ENCODE measurements at regions of chr6 and their contacts with region 1.

Region 1: DNA sequence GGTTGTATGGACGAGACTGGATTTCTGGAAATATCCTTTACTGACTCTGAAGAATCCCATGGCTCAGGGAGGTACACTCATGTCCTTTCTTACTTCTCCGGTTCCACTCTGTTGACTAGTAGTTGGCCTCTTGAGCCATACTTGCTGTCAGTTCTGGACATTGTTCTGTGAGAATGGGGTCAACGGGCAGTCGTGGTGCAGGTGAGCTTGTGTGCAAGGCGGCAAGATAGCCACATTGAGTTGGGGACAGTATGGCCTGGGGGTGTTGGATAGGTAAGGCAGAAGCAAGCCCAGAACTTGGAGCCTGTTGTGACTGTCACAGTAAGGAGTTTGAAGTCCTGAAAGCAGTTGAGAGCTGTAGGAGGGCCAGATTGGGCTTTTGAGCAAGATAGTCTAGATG is 13.5 kb upstream of the SLC22A1 start:
- DNase-seq: no peak

Region 2: GRCh38 chr6:160057080-160057479 is 51.0 kb before region 1 on chr6:
- intact Hi-C with region 1: no loop called
- DNase-seq: no peak

Region 3: GRCh38 chr6:160077526-160077925 is 30.6 kb before region 1 on chr6:
- intact Hi-C with region 1: no loop called
- DNase-seq: no peak

Region 4: GRCh38 chr6:160146454-160147145 is 38.5 kb after region 1 on chr6:
- intact Hi-C with region 1: loop called in 1 of 2 experiments (anchors 2 kb)
- DNase-seq: no peak

Measured in posterior vena cava (tissue), 2 donors.